Activated CD8-positive, alpha-beta T cell treated with anti-CD3 and anti-CD28 coated beads, Interleukin-2, amount 10 ng/mL, durations not matched to agents 7 days and 5 days (primary cell): ENCODE measurements at regions of chr1 and their contacts with region 1.

Region 1: DNA sequence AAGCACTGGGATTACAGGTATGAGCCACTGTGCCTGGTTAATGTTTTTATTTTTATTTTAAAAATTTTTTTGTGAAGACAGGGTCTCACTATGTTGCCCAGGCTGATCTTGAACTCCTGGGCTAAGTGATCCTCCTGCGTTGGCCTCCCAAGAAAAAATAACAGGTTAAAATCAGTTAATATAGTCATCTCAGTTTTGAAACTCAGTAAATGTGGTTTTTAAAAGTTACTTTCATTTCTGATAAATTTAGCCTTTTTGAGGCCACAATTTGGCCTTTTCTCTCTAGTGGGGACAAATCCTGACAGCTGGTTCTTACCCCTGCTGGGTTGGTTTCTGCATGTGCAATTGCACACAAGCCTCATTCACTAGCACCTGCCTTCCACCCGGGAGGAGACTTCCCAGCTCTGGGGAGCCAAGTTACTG is 13.3 kb downstream of the PMF1 start:
- DNase-seq: no peak
- ATAC-seq: peak; percentile 5
- H3K4me3 Mint-ChIP-seq: no peak overlapping the region
- H3K27ac Mint-ChIP-seq: peak overlapping the region; percentile 90
- H3K4me1 Mint-ChIP-seq: peaks cover 51% of the 10 kb centered on the region
- H3K27me3 Mint-ChIP-seq: no peaks in the 10 kb centered on the region

Region 2: GRCh38 chr1:156129706-156130581 is 96.2 kb before region 1 on chr1:
- CTCF ChIA-PET with region 1: interaction called, 35 read pairs
- POLR2A ChIA-PET with region 1: interaction called, 3 read pairs
- DNase-seq: peak; percentile 83
- ATAC-seq: no peak
- H3K4me3 Mint-ChIP-seq: no peak overlapping the region
- H3K27ac Mint-ChIP-seq: no peak overlapping the region
- H3K4me1 Mint-ChIP-seq: peaks cover 51% of the 10 kb centered on the region
- H3K27me3 Mint-ChIP-seq: peaks cover 7% of the 10 kb centered on the region

Region 3: DNA sequence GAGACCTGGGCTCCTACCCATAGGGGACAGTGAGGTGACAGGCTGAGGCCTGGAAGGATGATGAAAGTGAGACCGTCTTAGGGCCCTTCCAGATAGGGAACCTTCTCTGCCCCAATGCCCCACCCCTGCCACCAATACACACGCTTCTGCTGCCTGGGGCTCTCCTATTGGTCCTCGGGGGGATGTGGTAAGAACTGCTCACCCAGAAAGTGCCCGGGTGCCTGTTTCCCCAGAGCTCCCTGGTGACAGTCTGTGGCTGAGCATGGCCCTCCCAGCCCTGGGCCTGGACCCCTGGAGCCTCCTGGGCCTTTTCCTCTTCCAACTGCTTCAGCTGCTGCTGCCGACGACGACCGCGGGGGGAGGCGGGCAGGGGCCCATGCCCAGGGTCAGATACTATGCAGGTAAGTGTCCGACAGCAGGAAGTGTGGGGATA is 71.8 kb before region 1 on chr1:
- CTCF ChIA-PET with region 1: interaction called, 254 read pairs
- POLR2A ChIA-PET with region 1: interaction called, 13 read pairs
- DNase-seq: peak; percentile 77
- ATAC-seq: peak; percentile 93
- H3K4me3 Mint-ChIP-seq: peak overlapping the region; percentile 81
- H3K27ac Mint-ChIP-seq: peak overlapping the region; percentile 74
- H3K4me1 Mint-ChIP-seq: peaks cover 84% of the 10 kb centered on the region
- H3K27me3 Mint-ChIP-seq: no peaks in the 10 kb centered on the region

Region 4: GRCh38 chr1:156198831-156199349 is 27.2 kb before region 1 on chr1:
- CTCF ChIA-PET with region 1: interaction called, 65 read pairs
- POLR2A ChIA-PET with region 1: interaction called, 25 read pairs
- DNase-seq: no peak
- ATAC-seq: peak; percentile 44
- H3K4me3 Mint-ChIP-seq: peak overlapping the region; percentile 62
- H3K27ac Mint-ChIP-seq: peak overlapping the region; percentile 90
- H3K4me1 Mint-ChIP-seq: peaks cover 64% of the 10 kb centered on the region
- H3K27me3 Mint-ChIP-seq: no peaks in the 10 kb centered on the region